Activated CD4-positive, alpha-beta memory T cell treated with anti-CD3 and anti-CD28 coated beads, Interleukin-2, amount 10 ng/mL, durations not matched to agents 7 days and 5 days (primary cell): ENCODE measurements at regions of chr5 and their contacts with region 1.

Region 1: GRCh38 chr5:170312666-170313065 is 15.1 kb upstream of the LCP2 start:
- DNase-seq: peak; percentile 56
- H3K4me3 Mint-ChIP-seq: peak overlapping the region; percentile 52
- H3K27ac Mint-ChIP-seq: peak overlapping the region; percentile 79
- H3K4me1 Mint-ChIP-seq: peaks cover 30% of the 10 kb centered on the region
- H3K27me3 Mint-ChIP-seq: peaks cover 2% of the 10 kb centered on the region

Region 2: DNA sequence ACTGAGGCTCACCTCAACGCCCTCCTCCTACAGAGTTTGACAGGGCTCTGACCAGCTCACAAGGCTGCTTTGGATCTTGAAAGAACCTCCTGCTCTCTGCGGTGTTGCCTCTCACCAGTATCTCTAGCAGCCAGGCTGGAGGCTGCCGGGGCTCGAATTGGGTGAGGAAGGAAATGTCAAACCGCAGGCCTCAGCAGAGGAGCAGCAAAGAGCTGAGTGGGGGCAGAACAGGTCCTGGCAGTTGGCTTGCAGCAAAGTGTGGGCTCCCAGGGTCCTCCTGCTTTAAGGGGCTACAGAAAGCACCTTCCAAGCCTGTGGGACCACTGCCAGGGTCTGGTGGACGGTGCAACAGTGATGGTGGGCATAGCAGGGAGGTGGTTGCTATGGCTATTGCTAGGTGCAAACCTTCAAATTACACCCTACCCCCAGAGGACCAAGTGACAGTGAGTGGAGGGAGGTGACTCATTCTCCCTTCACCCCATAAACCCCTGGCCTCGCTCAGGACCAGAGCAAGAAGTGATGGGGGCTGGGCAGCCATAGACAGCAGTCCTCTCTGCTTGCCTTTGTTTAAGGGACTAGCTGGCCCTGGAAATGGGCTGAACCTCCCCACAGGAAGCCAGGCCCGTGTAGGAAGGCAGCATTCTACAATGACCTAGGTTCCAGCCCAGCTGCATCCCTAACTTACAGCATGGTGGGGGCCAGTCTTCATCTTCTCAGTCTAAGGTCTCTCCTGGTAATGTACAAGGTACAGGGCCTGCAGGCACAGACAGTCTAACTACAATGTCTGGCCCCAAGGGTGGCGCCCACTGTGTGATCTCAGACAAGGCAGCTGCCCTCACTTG is 33.8 kb before region 1 on chr5:
- CTCF ChIA-PET with region 1: interaction called, 9 read pairs
- POLR2A ChIA-PET with region 1: interaction called, 1,149 read pairs
- DNase-seq: peak; percentile 94
- H3K4me3 Mint-ChIP-seq: peak overlapping the region; percentile 69
- H3K27ac Mint-ChIP-seq: peak overlapping the region; percentile 97
- H3K4me1 Mint-ChIP-seq: peaks cover 97% of the 10 kb centered on the region
- H3K27me3 Mint-ChIP-seq: no peaks in the 10 kb centered on the region

Region 3: DNA sequence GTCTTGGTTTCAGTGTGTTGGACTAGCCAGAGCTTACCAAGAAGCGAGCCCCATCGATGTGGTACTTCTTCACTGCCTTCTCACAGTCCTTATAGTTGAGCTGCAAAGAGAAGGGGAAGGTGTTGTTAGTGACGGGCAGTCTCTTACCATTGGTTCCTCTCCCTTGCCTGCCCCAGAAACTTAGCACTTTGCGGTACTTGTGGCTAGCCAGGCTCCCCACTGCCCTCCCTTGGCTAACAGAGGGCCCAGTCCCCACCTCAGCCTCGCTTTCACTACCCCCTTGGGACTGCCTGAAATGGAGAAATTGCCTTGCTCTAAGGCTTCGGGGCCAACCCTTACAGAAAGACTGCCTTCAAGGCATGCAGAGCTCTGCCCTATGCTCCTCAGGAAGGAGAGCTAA is 19.4 kb before region 1 on chr5:
- CTCF ChIA-PET with region 1: interaction called, 12 read pairs
- POLR2A ChIA-PET with region 1: interaction called, 1,149 read pairs
- DNase-seq: peak; percentile 80
- H3K4me3 Mint-ChIP-seq: peak overlapping the region; percentile 99
- H3K27ac Mint-ChIP-seq: peak overlapping the region; percentile 96
- H3K4me1 Mint-ChIP-seq: peaks cover 70% of the 10 kb centered on the region
- H3K27me3 Mint-ChIP-seq: no peaks in the 10 kb centered on the region

Region 4: DNA sequence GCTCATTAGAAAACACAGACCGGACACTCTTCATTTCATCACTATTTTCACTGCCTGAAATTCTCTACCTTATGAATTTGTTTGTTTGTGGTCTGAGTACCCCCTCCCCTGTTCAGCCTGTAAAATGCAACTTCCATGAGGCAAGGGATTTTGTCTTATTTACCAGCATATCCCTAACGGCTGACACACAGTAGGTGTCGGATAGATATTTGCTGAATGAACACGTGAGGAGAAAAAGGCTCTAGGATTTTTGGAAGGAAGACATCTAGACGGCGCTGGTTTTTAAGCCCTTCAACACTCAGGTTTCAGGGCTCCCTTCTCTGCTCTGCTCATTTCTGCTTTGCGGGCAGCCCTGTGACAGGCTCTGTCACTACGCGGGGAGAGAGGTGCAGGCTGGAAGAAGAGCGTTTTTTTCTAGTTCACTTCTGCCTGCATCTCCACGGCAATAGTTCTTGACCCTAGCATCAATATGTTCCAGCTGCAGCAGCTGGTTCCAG is 35.5 kb after region 1 on chr5:
- CTCF ChIA-PET with region 1: no interaction called
- POLR2A ChIA-PET with region 1: no interaction called
- DNase-seq: no peak
- H3K4me3 Mint-ChIP-seq: no peak overlapping the region
- H3K27ac Mint-ChIP-seq: no peak overlapping the region
- H3K4me1 Mint-ChIP-seq: no peaks in the 10 kb centered on the region
- H3K27me3 Mint-ChIP-seq: peaks cover 50% of the 10 kb centered on the region